GM12878 (cell line): ENCODE measurements at regions of chr1 and their contacts with region 1.

Region 1: DNA sequence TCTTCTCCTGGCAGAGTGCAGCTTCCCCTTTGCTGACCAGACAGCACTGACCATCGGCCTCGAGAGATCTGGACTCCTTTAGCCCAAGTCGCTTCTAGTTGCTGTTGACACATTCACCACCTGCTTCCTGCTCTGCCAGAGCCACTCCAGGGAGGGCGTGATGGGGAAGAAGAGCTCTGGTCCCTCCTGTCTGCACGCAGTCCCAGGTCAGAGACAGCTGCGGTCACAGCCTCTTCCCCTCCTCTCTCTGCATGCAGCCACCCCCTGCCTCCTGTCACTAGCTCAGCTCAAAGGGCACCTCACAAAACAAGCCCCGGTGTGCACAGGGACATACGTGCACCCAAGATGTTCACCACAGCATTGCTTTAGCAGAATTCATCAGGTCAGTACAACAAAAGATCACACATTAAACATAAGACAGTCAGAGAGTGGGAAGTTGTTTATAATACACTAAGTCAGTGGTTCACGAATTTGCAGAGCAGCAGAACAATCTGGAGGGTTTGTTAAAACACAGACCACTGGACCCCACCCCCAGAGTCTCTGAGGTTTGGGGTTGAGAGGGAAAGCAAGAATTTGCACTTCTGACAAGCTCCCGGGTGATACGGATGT is 132.9 kb downstream of the SYF2 start:
- DNase-seq: no peak
- ATAC-seq: peak; percentile 47
- H3K4me3 ChIP-seq: no peak overlapping the region
- H3K27ac ChIP-seq: no peak overlapping the region
- H3K4me1 ChIP-seq: peaks cover 55% of the 10 kb centered on the region
- H3K27me3 ChIP-seq: no peaks in the 10 kb centered on the region
- CTCF ChIP-seq: no peak
- EP300 ChIP-seq: 0 out of 4 replicates have a peak, but pooled peaks of 1 of the 2 experiments have one; percentile 10
- POLR2A ChIP-seq: no peak
- RAD21 ChIP-seq: no peak

Region 2: DNA sequence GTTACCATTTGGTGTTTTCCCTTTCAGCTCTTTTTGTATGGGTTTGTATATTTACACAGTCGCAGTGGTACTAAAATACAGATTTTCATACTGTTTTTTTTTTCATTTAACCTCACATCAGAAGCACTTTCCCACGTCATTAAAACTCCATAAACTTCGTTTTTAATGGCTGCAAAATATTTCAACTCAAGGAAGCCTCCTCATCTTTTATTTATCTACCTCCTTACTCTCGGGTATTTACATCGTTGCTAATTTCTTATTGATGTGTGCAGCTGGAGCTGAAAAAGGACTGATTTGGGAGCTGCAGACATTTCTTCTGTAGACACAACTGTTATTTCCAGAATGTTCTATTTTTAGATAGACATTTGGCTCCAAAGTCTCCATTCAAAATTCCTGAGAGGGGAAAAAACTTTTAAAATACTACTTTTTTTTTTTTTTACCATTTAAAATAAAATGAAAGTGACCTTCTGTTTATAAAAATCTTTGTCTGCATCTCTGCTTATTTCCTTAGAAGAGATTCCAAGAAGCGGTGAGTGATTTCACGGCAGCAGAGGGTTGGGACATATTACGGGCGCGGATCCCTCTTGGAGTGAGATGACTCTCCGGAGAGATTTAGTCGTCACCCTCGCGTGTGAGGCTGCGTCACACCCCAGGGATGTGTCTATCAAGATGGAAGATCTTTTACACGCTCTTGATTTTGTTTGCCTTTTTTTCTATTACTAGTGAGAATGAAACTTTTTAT is 179.5 kb before region 1 on chr1:
- CTCF ChIA-PET with region 1: interaction called, 11 read pairs
- POLR2A ChIA-PET with region 1: no interaction called
- RAD21 ChIA-PET with region 1: no interaction called
- SMC1A ChIA-PET with region 1: interaction called, 8 read pairs
- in situ Hi-C with region 1: no loop called
- intact Hi-C with region 1: loop called (anchors 5 kb)
- DNase-seq: no peak
- ATAC-seq: no peak
- H3K4me3 ChIP-seq: no peak overlapping the region
- H3K27ac ChIP-seq: peak overlapping the region; percentile 67; the same call in 1 of the 2 replicates
- H3K4me1 ChIP-seq: peaks cover 83% of the 10 kb centered on the region
- H3K27me3 ChIP-seq: no peaks in the 10 kb centered on the region
- CTCF ChIP-seq: no peak
- EP300 ChIP-seq: no peak
- POLR2A ChIP-seq: no peak
- RAD21 ChIP-seq: no peak

Region 3: GRCh38 chr1:24946861-24947658 is 152.4 kb before region 1 on chr1:
- CTCF ChIA-PET with region 1: interaction called, 8 read pairs
- POLR2A ChIA-PET with region 1: interaction called, 4 read pairs
- RAD21 ChIA-PET with region 1: interaction called, 6 read pairs
- SMC1A ChIA-PET with region 1: interaction called, 10 read pairs
- in situ Hi-C with region 1: no loop called
- intact Hi-C with region 1: loop called (anchors 5 kb)
- DNase-seq: peak; percentile 70
- ATAC-seq: peak; percentile 84
- H3K4me3 ChIP-seq: 0 out of 2 replicates have a peak overlapping the region, but pooled peaks have one; percentile 44
- H3K27ac ChIP-seq: peak overlapping the region; percentile 85
- H3K4me1 ChIP-seq: peaks cover 56% of the 10 kb centered on the region
- H3K27me3 ChIP-seq: no peaks in the 10 kb centered on the region
- CTCF ChIP-seq: no peak
- EP300 ChIP-seq: peak; percentile 22 to 47; a peak in 2 of 4 replicates
- POLR2A ChIP-seq: peak; percentile 61; the same call in 1 of the 2 replicates
- RAD21 ChIP-seq: no peak

Region 4: DNA sequence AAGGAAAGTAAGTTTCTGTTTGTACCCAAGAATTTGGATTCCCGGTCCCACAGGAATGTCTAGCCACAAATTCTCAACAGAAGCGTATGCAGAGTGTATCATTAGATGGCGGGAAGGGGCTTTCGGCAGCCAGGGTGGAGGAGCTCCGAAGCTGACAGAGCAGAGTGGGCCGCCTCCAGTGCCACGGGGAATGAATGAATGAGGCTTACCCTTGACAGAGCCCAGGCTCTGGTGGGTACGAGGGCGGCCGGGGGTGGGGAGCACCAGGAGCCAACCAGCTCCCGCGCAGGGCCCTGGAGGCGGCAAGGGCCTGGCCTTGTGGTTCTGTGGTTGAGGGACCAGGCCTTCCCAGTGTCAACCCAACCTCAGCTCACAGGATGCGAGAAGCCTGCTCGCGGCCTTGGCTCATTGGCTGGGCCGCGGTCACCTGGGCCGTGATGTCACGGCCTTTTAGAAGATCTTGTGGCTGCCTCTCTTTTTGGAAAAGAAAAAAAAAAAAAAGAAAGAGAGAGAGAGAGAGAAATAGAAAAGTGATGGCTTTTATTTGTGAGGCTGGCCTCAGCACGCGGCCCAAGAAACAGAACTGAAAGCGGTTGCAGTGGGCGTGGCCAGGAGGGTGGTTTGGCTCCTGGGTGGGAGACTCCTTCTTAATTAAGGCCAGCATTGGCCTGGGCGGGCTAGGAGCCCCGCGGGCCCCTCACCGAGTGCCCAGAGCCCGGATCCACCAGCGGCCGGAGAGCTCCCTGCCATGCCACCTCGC is 134.5 kb before region 1 on chr1:
- CTCF ChIA-PET with region 1: interaction called, 26 read pairs
- POLR2A ChIA-PET with region 1: interaction called, 3 read pairs
- RAD21 ChIA-PET with region 1: interaction called, 23 read pairs
- SMC1A ChIA-PET with region 1: interaction called, 20 read pairs
- in situ Hi-C with region 1: loop called (anchors 5 kb)
- intact Hi-C with region 1: no loop called
- DNase-seq: peak; percentile 96
- ATAC-seq: peak; percentile 81
- H3K4me3 ChIP-seq: peak overlapping the region; percentile 97
- H3K27ac ChIP-seq: peak overlapping the region; percentile 98
- H3K4me1 ChIP-seq: peaks cover 29% of the 10 kb centered on the region
- H3K27me3 ChIP-seq: no peaks in the 10 kb centered on the region
- CTCF ChIP-seq: no peak
- EP300 ChIP-seq: peak in 1 of 2 experiments; percentile 84; a peak in 3 of 4 replicates
- POLR2A ChIP-seq: peak; percentile 86
- RAD21 ChIP-seq: peak; percentile 19; the same call in 1 of the 2 replicates

Region 5: GRCh38 chr1:25011943-25012638 is 87.4 kb before region 1 on chr1:
- CTCF ChIA-PET with region 1: no interaction called
- POLR2A ChIA-PET with region 1: no interaction called
- RAD21 ChIA-PET with region 1: no interaction called
- SMC1A ChIA-PET with region 1: no interaction called
- in situ Hi-C with region 1: no loop called
- intact Hi-C with region 1: no loop called
- DNase-seq: no peak
- ATAC-seq: no peak
- H3K4me3 ChIP-seq: no peak overlapping the region
- H3K27ac ChIP-seq: no peak overlapping the region
- H3K4me1 ChIP-seq: peaks cover 3% of the 10 kb centered on the region; the same call in 1 of the 2 replicates
- H3K27me3 ChIP-seq: no peaks in the 10 kb centered on the region
- CTCF ChIP-seq: no peak
- EP300 ChIP-seq: no peak
- POLR2A ChIP-seq: no peak
- RAD21 ChIP-seq: no peak

Region 6: DNA sequence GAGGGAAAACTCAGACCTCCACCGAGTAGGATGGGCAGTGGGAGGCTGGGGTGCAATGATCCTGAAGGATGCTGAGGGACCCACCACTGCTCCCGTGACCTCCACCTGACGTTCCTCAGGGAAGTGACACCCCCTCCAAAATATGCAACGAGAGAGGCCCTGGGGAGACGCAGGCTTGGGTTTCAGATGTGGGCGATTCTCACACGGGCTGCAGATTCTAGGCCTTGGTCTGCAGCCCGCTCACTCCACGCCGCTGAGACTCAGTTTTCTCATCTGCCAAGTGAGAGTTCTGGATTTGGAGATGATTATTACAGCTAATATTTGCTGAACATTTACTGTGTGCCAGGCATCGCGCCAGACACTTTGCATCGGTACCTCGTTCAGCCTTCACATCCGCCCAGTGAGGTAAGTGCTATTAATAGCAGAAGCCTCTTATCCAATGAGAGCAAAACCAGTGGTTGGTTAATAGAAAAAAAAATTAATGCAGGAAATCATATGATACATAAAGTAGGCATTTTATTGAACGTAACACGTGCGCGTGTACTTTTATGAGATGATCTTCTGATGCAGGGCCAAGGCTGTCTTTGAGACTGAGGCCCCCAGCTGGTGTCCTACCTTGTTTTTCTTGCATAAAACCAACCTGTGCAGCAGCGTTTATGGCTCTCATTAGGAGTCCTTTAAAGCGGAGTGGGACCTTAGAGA is 67.3 kb before region 1 on chr1:
- CTCF ChIA-PET with region 1: interaction called, 56 read pairs
- POLR2A ChIA-PET with region 1: interaction called, 5 read pairs
- RAD21 ChIA-PET with region 1: interaction called, 30 read pairs
- SMC1A ChIA-PET with region 1: interaction called, 61 read pairs
- in situ Hi-C with region 1: no loop called
- intact Hi-C with region 1: loop called (anchors 2 kb)
- DNase-seq: peak; percentile 94
- ATAC-seq: peak; percentile 44
- H3K4me3 ChIP-seq: peak overlapping the region; percentile 73
- H3K27ac ChIP-seq: peak overlapping the region; percentile 100
- H3K4me1 ChIP-seq: peaks cover 93% of the 10 kb centered on the region
- H3K27me3 ChIP-seq: no peaks in the 10 kb centered on the region
- CTCF ChIP-seq: peak in 1 of 3 experiments; percentile 30; a peak in 1 of 6 replicates
- EP300 ChIP-seq: peak in 1 of 2 experiments; percentile 17; a peak in 1 of 4 replicates
- POLR2A ChIP-seq: peak; percentile 66
- RAD21 ChIP-seq: peak; percentile 33; the same call in 1 of the 2 replicates

Region 7: GRCh38 chr1:25148673-25149300 is 49.3 kb after region 1 on chr1:
- CTCF ChIA-PET with region 1: interaction called, 6 read pairs
- POLR2A ChIA-PET with region 1: no interaction called
- RAD21 ChIA-PET with region 1: no interaction called
- SMC1A ChIA-PET with region 1: interaction called, 14 read pairs
- in situ Hi-C with region 1: no loop called
- intact Hi-C with region 1: no loop called
- DNase-seq: no peak
- ATAC-seq: peak; percentile 78
- H3K4me3 ChIP-seq: no peak overlapping the region
- H3K27ac ChIP-seq: no peak overlapping the region
- H3K4me1 ChIP-seq: peaks cover 12% of the 10 kb centered on the region
- H3K27me3 ChIP-seq: peaks cover 2 to 12% of the 10 kb centered on the region in 2 experiments
- CTCF ChIP-seq: peak; percentile 61 to 81 (median 67)
- EP300 ChIP-seq: no peak
- POLR2A ChIP-seq: no peak
- RAD21 ChIP-seq: peak; percentile 82